ENCODE measurements at regions of chrX and their contacts with region 1.

Region 1: DNA sequence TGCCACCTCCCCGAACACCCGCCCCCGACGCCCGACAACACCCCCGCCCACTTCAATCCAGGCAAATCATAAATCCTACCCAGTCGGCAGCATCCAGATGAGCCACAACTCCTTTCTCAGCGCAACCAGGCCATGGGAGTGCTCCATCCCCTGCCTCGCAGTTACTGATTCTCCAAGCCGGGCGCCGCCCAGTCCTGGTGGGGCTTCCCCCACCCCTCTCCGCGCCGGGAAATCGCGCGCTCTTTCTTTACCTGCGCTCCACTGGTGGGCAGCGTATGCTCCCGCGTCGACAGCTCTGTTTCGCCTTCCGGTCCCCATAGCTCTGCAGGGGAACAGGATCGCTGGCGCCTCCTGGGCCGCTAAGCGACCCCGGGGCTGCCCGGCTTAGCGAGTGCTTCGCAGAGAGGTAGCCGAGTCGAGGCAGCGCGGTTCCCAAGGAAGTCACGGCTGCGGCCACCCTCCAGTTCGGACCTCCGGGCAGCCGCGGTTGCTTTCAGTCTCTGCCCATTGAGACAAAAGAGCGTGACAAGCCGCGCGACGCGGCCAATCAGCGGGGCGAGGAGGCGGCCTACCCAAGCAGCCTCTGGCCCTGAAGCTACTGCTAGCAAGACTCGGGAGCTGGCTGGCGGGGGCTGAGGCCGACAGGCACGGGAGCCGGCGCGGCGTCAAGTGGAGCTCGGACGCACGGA is 43.7 kb upstream of the TMSB15B start:
- DNase-seq: no peak
- ATAC-seq: peak; percentile 82
- H3K4me3 ChIP-seq: peak overlapping the region; percentile 80
- H3K27ac ChIP-seq: peak overlapping the region; percentile 85
- H3K4me1 ChIP-seq: no peaks in the 10 kb centered on the region
- H3K27me3 ChIP-seq: no peaks in the 10 kb centered on the region
- CTCF ChIP-seq: no peak
- EP300 ChIP-seq: no peak
- POLR2A ChIP-seq: peak; percentile 80
- RAD21 ChIP-seq: no peak

Region 2: GRCh38 chrX:103651151-103651783 is 267.5 kb before region 1 on chrX:
- CTCF ChIA-PET with region 1: no interaction called
- POLR2A ChIA-PET with region 1: no interaction called
- RAD21 ChIA-PET with region 1: no interaction called
- SMC1A ChIA-PET with region 1: no interaction called
- in situ Hi-C with region 1: no loop called
- intact Hi-C with region 1: no loop called
- DNase-seq: no peak
- ATAC-seq: no peak
- H3K4me3 ChIP-seq: no peak overlapping the region
- H3K27ac ChIP-seq: no peak overlapping the region
- H3K4me1 ChIP-seq: no peaks in the 10 kb centered on the region
- H3K27me3 ChIP-seq: no peaks in the 10 kb centered on the region; a peak in 1 of 4 replicates
- CTCF ChIP-seq: no peak
- EP300 ChIP-seq: no peak
- POLR2A ChIP-seq: no peak
- RAD21 ChIP-seq: no peak

Region 3: GRCh38 chrX:103932133-103932532 is 13.4 kb after region 1 on chrX:
- CTCF ChIA-PET with region 1: interaction called, 33 read pairs
- POLR2A ChIA-PET with region 1: interaction called, 19 read pairs
- RAD21 ChIA-PET with region 1: interaction called, 28 read pairs
- SMC1A ChIA-PET with region 1: interaction called, 106 read pairs
- in situ Hi-C with region 1: no loop called
- intact Hi-C with region 1: no loop called
- DNase-seq: no peak
- ATAC-seq: peak; percentile 94
- H3K4me3 ChIP-seq: no peak overlapping the region
- H3K27ac ChIP-seq: peak overlapping the region; percentile 48
- H3K4me1 ChIP-seq: no peaks in the 10 kb centered on the region
- H3K27me3 ChIP-seq: no peaks in the 10 kb centered on the region
- CTCF ChIP-seq: no peak
- EP300 ChIP-seq: no peak
- POLR2A ChIP-seq: no peak
- RAD21 ChIP-seq: no peak

Region 4: DNA sequence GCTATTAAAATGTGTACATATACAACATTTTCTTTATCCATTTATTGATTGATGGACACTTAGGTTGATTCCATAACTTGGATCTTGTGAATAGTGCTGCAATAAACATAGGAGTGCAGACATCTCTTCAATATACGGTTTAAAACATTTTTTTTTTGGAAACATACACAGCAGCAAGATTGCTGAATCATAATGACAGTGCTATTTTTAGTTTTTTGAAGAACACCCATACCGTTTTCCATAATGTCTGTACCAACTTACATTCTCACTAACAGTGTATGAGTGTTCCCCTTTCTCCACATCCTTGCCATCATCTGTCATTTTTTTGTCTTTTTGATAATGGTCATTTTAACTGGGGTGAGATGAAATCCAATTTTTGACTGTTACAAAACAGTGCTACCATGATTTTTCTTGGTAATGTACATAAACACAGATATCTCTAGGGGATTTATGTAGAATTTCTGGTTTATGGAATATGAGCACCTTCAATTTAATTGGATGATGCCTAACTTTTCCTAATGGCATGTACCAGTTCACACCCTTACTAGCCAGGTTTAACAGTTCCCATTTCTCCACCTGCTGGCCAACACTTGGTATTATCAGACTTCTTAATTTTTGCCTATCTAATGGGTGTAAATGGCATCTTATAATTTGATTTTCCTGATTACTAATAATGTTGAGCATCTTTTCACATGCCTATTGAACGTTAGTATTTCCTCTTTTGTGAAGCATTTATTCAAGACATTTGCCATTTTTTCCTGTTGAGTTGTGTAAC is 22.7 kb after region 1 on chrX:
- CTCF ChIA-PET with region 1: interaction called, 64 read pairs
- POLR2A ChIA-PET with region 1: interaction called, 9 read pairs
- RAD21 ChIA-PET with region 1: interaction called, 43 read pairs
- SMC1A ChIA-PET with region 1: interaction called, 106 read pairs
- in situ Hi-C with region 1: no loop called
- intact Hi-C with region 1: loop called (anchors 1 kb)
- DNase-seq: no peak
- ATAC-seq: peak; percentile 84
- H3K4me3 ChIP-seq: no peak overlapping the region
- H3K27ac ChIP-seq: no peak overlapping the region
- H3K4me1 ChIP-seq: peaks cover 2% of the 10 kb centered on the region
- H3K27me3 ChIP-seq: no peaks in the 10 kb centered on the region
- CTCF ChIP-seq: peak; percentile 44 to 48 (median 47); a peak in 5 of 6 replicates
- EP300 ChIP-seq: no peak
- POLR2A ChIP-seq: no peak
- RAD21 ChIP-seq: peak; percentile 55; the same call in 1 of the 2 replicates

Region 5: DNA sequence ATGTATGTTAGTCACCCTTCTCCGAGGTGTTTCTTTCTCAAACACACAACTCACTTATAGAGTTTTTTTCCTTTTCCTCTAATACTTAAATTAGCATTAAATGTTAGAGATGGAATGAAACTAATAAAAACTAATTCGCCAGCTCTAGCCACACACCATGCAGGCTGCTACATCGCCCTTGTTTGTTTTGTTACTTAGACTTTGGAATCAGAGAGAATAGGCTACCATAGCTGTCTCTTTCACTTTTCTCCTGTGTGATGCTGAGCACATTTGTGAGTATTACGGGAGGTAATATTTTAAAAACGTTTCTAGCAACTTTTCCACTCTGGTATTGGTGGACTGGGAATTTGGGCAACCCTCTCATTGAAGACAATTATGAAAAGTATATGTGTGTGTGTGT is 292.5 kb after region 1 on chrX:
- CTCF ChIA-PET with region 1: no interaction called
- POLR2A ChIA-PET with region 1: no interaction called
- RAD21 ChIA-PET with region 1: no interaction called
- SMC1A ChIA-PET with region 1: no interaction called
- in situ Hi-C with region 1: no loop called
- intact Hi-C with region 1: no loop called
- DNase-seq: no peak
- ATAC-seq: no peak
- H3K4me3 ChIP-seq: no peak overlapping the region
- H3K27ac ChIP-seq: no peak overlapping the region
- H3K4me1 ChIP-seq: no peaks in the 10 kb centered on the region
- H3K27me3 ChIP-seq: no peaks in the 10 kb centered on the region
- CTCF ChIP-seq: no peak
- EP300 ChIP-seq: no peak
- POLR2A ChIP-seq: no peak
- RAD21 ChIP-seq: no peak

Measured in GM12878 (cell line).